Activated B cell treated with CpG ODN at 0.5 μM for 24 hours (primary cell): ENCODE measurements at regions of chr17 and their contacts with region 1.

Region 1: GRCh38 chr17:42527273-42527703 is 8.8 kb upstream of the NAGLU start:
- DNase-seq: peak; percentile 42
- ATAC-seq: peak; percentile 76
- H3K4me3 Mint-ChIP-seq: no peak overlapping the region
- H3K27ac Mint-ChIP-seq: no peak overlapping the region
- H3K4me1 Mint-ChIP-seq: peaks cover 31% of the 10 kb centered on the region
- H3K27me3 Mint-ChIP-seq: no peaks in the 10 kb centered on the region
- CTCF ChIP-seq: peak; percentile 38

Region 2: DNA sequence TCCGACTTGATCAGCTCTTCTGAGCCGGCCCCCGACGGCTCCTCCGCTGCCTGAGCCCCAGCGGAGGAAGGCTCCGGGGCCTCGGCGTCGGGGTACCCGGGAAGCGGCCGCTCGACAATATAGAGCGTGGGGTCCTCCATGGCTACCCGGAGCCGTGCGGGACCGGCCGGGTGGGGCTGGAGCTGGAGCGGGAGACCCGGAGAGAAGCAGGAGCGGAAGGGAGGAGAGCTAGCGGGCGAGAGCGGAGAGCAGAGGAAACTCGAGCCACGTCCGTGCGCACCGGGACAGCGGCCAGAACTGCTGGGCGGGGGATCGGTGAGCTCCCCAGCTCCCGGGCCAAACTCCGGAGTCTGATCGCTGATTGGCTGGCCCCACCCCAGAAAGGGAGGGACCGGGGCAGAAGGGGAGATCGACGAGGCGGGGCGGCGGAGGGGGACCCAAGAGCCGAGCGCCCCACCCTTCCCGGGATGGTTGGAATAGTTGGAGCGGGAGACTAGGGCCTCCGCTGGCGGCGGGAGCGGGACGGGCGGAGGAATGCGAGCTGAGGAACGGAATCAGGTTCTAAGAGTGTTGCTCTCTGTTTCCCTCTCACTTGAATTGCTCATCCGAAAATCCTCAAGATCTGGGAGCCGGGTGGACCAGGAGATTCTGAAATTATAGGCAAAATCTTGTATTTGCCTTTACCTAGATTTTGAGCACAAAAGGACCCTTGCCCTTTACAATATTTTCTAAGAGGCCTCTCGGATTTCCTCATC is 104.2 kb before region 1 on chr17 and contains the start of gene CAVIN1:
- CTCF ChIA-PET with region 1: interaction called, 10 read pairs
- POLR2A ChIA-PET with region 1: interaction called, 12 read pairs
- intact Hi-C with region 1: loop called (anchors 1 kb)
- DNase-seq: no peak
- ATAC-seq: peak; percentile 25
- H3K4me3 Mint-ChIP-seq: peak within 1 kb of the TSS; percentile 86
- H3K27ac Mint-ChIP-seq: no peak within 1 kb of the TSS
- H3K4me1 Mint-ChIP-seq: peaks cover 17% of the 10 kb centered on the region
- H3K27me3 Mint-ChIP-seq: peaks cover 35% of the 10 kb centered on the region
- CTCF ChIP-seq: no peak
- total RNA-seq, gene CAVIN1: 0.10 and 0.20 TPM in 2 replicates

Region 3: GRCh38 chr17:42484304-42484703 is 43.0 kb before region 1 on chr17:
- CTCF ChIA-PET with region 1: no interaction called
- POLR2A ChIA-PET with region 1: no interaction called
- intact Hi-C with region 1: no loop called
- DNase-seq: no peak
- ATAC-seq: no peak
- H3K4me3 Mint-ChIP-seq: no peak overlapping the region
- H3K27ac Mint-ChIP-seq: no peak overlapping the region
- H3K4me1 Mint-ChIP-seq: peaks cover 6% of the 10 kb centered on the region
- H3K27me3 Mint-ChIP-seq: no peaks in the 10 kb centered on the region
- CTCF ChIP-seq: no peak

Region 4: GRCh38 chr17:42512241-42512625 is 15.1 kb before region 1 on chr17:
- CTCF ChIA-PET with region 1: no interaction called
- POLR2A ChIA-PET with region 1: no interaction called
- intact Hi-C with region 1: no loop called
- DNase-seq: no peak
- ATAC-seq: no peak
- H3K4me3 Mint-ChIP-seq: no peak overlapping the region
- H3K27ac Mint-ChIP-seq: no peak overlapping the region
- H3K4me1 Mint-ChIP-seq: peaks cover 16% of the 10 kb centered on the region
- H3K27me3 Mint-ChIP-seq: no peaks in the 10 kb centered on the region
- CTCF ChIP-seq: no peak

Region 5: GRCh38 chr17:42698736-42699414 is 171.6 kb after region 1 on chr17:
- CTCF ChIA-PET with region 1: no interaction called
- POLR2A ChIA-PET with region 1: no interaction called
- intact Hi-C with region 1: no loop called
- DNase-seq: no peak
- ATAC-seq: no peak
- H3K4me3 Mint-ChIP-seq: no peak overlapping the region
- H3K27ac Mint-ChIP-seq: no peak overlapping the region
- H3K4me1 Mint-ChIP-seq: peaks cover 18% of the 10 kb centered on the region
- H3K27me3 Mint-ChIP-seq: no peaks in the 10 kb centered on the region
- CTCF ChIP-seq: no peak